ENCODE measurements at regions of chr9 and their contacts with region 1.

Region 1: DNA sequence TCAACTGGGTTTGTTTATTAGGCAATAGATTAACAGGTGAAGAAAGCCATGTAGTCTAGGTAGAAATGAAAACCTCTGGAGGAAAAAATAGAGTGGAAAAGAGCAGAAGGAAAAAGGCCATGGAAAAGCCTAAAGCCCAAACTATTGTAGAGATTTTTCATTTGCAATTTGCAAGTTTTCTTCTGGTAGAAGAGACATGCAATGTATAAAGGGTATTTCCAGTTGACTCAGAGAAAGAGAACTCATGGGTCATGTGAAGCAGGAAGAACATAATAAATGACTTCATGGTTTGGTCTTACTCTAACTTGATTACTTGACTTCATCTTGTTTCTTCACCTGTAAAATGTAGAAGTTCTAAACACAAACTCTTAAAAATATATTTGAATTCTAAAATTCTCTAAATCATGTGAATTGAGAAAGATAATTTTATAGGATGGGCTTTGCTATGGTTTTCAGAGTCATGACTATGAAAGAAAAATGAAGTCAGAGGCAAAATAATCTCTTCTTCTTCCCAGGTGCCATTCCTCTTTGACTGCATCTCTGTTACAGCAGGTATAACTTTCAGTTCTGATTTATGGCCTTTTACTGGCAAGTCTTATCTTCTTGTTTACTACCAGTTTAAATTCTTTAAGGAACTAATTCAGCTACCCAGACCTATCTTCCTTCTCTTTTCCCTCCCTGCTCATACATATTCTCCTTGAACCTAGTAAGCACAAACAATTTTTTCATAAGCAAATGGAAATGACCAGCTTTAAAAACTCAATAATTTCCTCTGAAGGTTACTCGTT is 47.7 kb upstream of the TMC1 start:
- DNase-seq: peak; percentile 66
- H3K4me3 ChIP-seq: no peak overlapping the region
- H3K27ac ChIP-seq: peak overlapping the region; percentile 38
- H3K4me1 ChIP-seq: peaks cover 33% of the 10 kb centered on the region
- H3K27me3 ChIP-seq: no peaks in the 10 kb centered on the region
- CTCF ChIP-seq: no peak
- POLR2A ChIP-seq: no peak

Region 2: DNA sequence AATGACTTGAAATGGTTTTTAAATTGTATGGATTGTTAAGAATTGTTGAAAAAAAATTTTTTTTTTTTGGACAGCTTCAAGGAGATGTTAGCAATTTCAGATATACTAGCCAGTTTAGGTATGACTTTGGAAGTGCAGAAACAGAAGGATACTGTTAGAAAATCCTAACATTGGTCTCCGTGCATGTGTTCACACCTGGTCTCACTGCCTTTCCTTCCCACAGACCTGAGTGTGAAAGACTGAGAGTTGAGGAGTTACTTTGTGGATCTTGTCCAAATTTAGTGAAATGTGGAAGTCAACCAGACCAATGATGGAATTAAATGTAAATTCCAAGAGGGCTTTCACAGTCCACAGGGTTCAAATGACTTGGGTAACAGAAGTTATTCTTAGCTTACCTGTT is 222.1 kb before region 1 on chr9:
- CTCF ChIA-PET with region 1: no interaction called
- POLR2A ChIA-PET with region 1: no interaction called
- dilution Hi-C with region 1: no loop called
- intact Hi-C with region 1: no loop called
- DNase-seq: no peak
- H3K4me3 ChIP-seq: no peak overlapping the region
- H3K27ac ChIP-seq: no peak overlapping the region
- H3K4me1 ChIP-seq: no peaks in the 10 kb centered on the region
- H3K27me3 ChIP-seq: peaks cover 6% of the 10 kb centered on the region in 2 experiments
- CTCF ChIP-seq: no peak
- POLR2A ChIP-seq: no peak

Region 3: DNA sequence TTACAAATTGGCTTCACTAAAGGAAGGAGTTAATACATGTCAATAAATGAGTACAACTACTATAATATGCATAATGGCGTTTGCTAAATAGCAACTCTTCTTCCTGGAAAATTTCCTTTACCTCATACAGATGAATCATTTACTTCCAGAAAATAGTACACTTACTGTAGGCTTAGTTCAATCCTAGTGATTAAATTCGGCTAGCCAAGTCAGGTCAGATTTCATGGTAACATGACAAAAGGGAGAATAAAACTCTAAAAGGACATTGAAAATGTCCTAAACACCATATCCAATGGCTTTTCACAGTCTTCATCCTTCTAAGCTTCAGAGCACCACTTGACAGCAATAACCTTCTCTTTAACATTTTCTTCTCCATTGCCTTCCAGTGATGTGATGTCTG is 66.6 kb before region 1 on chr9:
- CTCF ChIA-PET with region 1: no interaction called
- POLR2A ChIA-PET with region 1: interaction called, 11 read pairs
- dilution Hi-C with region 1: no loop called
- intact Hi-C with region 1: no loop called
- DNase-seq: no peak
- H3K4me3 ChIP-seq: no peak overlapping the region
- H3K27ac ChIP-seq: no peak overlapping the region
- H3K4me1 ChIP-seq: no peaks in the 10 kb centered on the region
- H3K27me3 ChIP-seq: no peaks in the 10 kb centered on the region
- CTCF ChIP-seq: no peak
- POLR2A ChIP-seq: no peak

Region 4: GRCh38 chr9:72485821-72486593 is 12.3 kb after region 1 on chr9:
- CTCF ChIA-PET with region 1: no interaction called
- POLR2A ChIA-PET with region 1: no interaction called
- dilution Hi-C with region 1: no loop called
- intact Hi-C with region 1: no loop called
- DNase-seq: no peak
- H3K4me3 ChIP-seq: no peak overlapping the region
- H3K27ac ChIP-seq: no peak overlapping the region
- H3K4me1 ChIP-seq: peaks cover 4% of the 10 kb centered on the region
- H3K27me3 ChIP-seq: no peaks in the 10 kb centered on the region
- CTCF ChIP-seq: no peak
- POLR2A ChIP-seq: no peak

Region 5: GRCh38 chr9:72540348-72540873 is 66.7 kb after region 1 on chr9:
- CTCF ChIA-PET with region 1: no interaction called
- POLR2A ChIA-PET with region 1: no interaction called
- dilution Hi-C with region 1: no loop called
- intact Hi-C with region 1: no loop called
- DNase-seq: no peak
- H3K4me3 ChIP-seq: no peak overlapping the region
- H3K27ac ChIP-seq: no peak overlapping the region
- H3K4me1 ChIP-seq: no peaks in the 10 kb centered on the region
- H3K27me3 ChIP-seq: no peaks in the 10 kb centered on the region
- CTCF ChIP-seq: no peak
- POLR2A ChIP-seq: no peak